Heart left ventricle (tissue), 16 donors: ENCODE measurements at regions of chr7 and their contacts with region 1.

Region 1: DNA sequence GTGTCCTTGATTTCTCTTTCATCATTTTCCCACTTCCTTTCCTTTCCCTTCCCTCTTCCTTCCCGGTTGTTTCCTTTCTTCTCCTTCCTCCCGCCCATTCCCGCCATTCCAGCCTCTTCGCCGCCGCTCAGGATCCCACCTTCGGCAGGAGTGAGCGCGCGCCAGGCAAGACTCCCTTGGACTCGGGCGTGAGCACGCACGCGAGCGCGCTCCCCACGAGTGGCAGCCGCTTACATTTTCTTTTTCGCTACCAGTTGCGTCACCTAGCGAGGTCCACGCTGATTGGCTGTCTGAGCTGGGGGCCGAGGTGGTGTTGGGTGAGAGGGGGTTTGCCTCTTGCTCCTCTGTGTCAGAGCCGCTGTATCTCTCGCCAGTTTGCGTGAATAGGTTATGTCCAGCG is 11.8 kb downstream of the ZAN start:
- DNase-seq: peak in 4 of 5 donors; percentile 21 to 65 (median 44)
- ATAC-seq: peak in 2 of 4 donors; percentile 50 to 84
- H3K4me3 ChIP-seq: peak overlapping the region in 10 of 12 donors; percentile 12 to 51 (median 29)
- H3K27ac ChIP-seq: no peak overlapping the region
- H3K4me1 ChIP-seq: peaks cover 0 to 3% (median 0%) of the 10 kb centered on the region in 12 donors
- H3K27me3 ChIP-seq: peaks cover 0 to 45% (median 1%) of the 10 kb centered on the region in 9 donors
- CTCF ChIP-seq: no peak
- POLR2A ChIP-seq: no peak

Region 2: DNA sequence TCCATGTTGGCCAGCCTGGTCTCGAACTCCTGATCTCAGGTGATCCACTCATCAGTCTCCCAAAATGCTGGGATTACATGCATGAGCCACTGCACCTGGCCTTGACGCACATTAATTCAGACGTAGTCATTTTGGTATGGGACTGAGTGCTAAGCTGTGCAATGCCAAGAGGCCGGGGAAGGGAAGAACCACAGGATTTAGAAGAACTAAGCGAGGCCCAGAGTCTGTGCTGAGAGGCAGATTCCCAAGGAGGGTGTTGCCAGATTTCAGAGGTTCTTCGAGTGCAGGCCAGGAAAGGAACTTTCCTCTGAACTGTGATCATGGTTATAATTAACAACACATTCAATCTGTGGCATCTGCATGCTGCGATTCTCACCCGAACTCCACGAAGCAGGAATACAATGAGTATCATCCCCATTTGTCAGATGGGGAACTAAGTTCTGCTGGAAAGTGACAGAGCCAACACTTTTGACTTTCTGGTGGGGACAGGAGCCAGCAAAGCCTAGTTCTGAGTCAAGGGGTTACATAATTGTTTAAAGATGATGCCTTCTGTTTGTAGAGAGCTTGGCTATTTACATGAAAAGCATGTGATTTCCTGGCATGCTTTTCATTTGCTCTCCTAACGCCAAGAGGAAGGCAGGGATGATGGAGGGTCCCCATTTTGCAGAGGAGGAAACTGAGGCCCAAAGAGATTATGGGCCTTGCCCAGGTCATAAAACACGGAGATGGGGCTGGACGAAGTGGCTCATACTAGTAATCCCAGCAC is 18.0 kb before region 1 on chr7:
- intact Hi-C with region 1: loop called in 2 of 10 experiments (anchors 1 to 2 kb)
- DNase-seq: peak in 1 of 5 donors; percentile 3
- ATAC-seq: no peak
- H3K4me3 ChIP-seq: no peak overlapping the region
- H3K27ac ChIP-seq: no peak overlapping the region
- H3K4me1 ChIP-seq: peaks cover 0 to 3% (median 0%) of the 10 kb centered on the region in 12 donors
- H3K27me3 ChIP-seq: peaks cover 0 to 37% (median 9%) of the 10 kb centered on the region in 9 donors
- CTCF ChIP-seq: no peak
- POLR2A ChIP-seq: no peak

Region 3: GRCh38 chr7:100949227-100949932 is 204.2 kb after region 1 on chr7 and contains the start of gene MUC3A:
- intact Hi-C with region 1: no loop called
- DNase-seq: peak in 4 of 5 donors; percentile 37 to 52 (median 46)
- ATAC-seq: peak in 2 of 4 donors; percentile 62 to 63
- H3K4me3 ChIP-seq: peak within 1 kb of the TSS in 10 of 12 donors; percentile 8 to 43 (median 28)
- H3K27ac ChIP-seq: peak within 1 kb of the TSS in 6 of 12 donors; percentile 37 to 74 (median 54)
- H3K4me1 ChIP-seq: no peaks in the 10 kb centered on the region
- H3K27me3 ChIP-seq: peaks cover 0 to 59% (median 23%) of the 10 kb centered on the region in 9 donors
- CTCF ChIP-seq: no peak
- POLR2A ChIP-seq: no peak
- total RNA-seq, gene MUC3A: 0.16 to 1.4 (median 0.45) TPM